HEK293 (cell line): ENCODE measurements at regions of chr11 and their contacts with region 1.

Region 1: GRCh38 chr11:65569973-65570918 is at the start of gene ZNRD2:
- H3K4me3 ChIP-seq: peak within 1 kb of the TSS; percentile 74
- H3K27ac ChIP-seq: peak within 1 kb of the TSS; percentile 93
- H3K4me1 ChIP-seq: peaks cover 16% of the 10 kb centered on the region; the same call in 1 of the 2 replicates
- CTCF ChIP-seq: peak; percentile 92

Region 2: DNA sequence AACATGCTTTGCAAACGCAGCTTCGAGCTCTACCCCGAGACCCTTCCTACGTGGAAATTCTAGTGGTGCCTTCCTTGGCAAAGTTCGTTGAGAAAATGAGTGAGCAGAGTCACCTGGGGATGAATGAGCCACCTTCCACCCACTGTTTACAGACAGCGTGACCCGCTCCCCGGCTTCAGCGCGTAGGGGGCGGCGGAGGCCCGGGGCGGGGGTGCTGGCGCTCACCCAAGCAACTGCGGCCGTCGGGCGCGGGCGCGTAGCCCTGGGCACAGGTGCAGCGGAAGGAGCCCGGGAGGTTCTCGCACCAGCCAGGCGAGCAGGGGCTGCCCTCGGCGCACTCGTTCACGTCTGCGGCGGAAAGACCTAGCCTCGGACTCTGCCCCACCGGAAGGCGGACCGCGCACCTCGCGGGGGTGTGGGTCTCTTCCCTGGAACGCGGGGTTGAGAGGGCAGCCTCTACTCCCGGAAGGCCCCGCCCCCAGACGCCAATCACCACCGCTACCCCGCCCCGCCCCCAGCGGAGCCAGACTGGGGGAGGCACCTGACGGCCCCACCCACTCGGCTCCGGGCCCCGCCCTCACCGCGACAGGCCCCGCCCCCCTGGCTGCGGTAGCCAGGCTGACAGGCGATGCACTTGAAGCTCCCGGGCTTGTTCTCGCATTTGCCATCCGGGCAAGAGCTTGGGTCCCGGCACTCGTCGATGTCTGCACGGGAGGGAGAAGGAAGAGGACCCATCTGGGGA is 23.9 kb before region 1 on chr11:
- CTCF ChIA-PET with region 1: interaction called, 133 read pairs
- POLR2A ChIA-PET with region 1: interaction called, 39 read pairs
- H3K4me3 ChIP-seq: peak overlapping the region; percentile 31
- H3K27ac ChIP-seq: no peak overlapping the region
- H3K4me1 ChIP-seq: no peaks in the 10 kb centered on the region; the same call in 1 of the 2 replicates
- CTCF ChIP-seq: no peak

Region 3: GRCh38 chr11:65558002-65558931 is 12.0 kb before region 1 on chr11 and contains the start of gene LTBP3:
- CTCF ChIA-PET with region 1: interaction called, 39 read pairs
- POLR2A ChIA-PET with region 1: interaction called, 41 read pairs
- H3K4me3 ChIP-seq: peak within 1 kb of the TSS; percentile 52
- H3K27ac ChIP-seq: peak within 1 kb of the TSS; percentile 81
- H3K4me1 ChIP-seq: peaks cover 19% of the 10 kb centered on the region
- CTCF ChIP-seq: no peak

Region 4: GRCh38 chr11:65588199-65589054 is 18.2 kb after region 1 on chr11:
- CTCF ChIA-PET with region 1: interaction called, 28 read pairs
- POLR2A ChIA-PET with region 1: interaction called, 6 read pairs
- H3K4me3 ChIP-seq: no peak overlapping the region
- H3K27ac ChIP-seq: no peak overlapping the region
- H3K4me1 ChIP-seq: no peaks in the 10 kb centered on the region
- CTCF ChIP-seq: peak; percentile 35; the same call in 1 of the 2 replicates

Region 5: DNA sequence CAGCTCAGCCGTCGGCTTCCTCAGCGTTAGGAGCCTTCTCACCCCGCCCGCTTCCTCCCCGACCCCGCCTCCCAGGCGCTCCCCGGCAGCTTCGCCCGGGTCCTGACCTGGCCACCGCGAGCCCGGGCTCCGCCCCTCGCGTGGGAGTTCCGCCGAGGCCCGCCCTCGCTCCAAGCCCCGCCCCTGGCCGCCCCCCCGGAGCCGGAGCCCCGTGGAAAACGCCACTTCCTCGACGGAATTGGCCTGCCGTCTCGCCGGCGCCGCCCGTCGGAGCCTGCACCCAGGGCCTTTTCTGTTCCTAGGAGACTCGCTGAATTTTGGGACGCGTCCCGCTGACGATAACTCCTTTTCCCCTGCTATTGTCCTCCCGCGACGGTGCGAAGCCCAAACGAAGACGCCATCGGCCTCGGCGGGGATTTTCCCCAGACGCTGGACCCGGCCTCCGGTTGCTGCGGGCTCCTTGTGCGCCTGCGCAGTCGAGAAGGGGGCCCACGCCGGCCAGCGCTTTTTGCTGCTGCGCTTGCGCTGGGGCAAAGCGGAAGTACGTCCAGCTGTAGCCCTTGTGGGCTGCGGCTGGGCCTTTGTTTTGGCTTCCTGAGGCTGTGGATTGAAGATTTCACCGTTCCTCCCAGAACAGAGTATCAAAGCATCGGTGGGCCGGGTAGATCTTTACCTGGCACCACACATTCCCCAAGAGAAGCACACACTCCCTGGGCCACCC is 82.4 kb after region 1 on chr11:
- CTCF ChIA-PET with region 1: no interaction called
- POLR2A ChIA-PET with region 1: no interaction called
- H3K4me3 ChIP-seq: peak overlapping the region; percentile 46
- H3K27ac ChIP-seq: peak overlapping the region; percentile 54
- H3K4me1 ChIP-seq: peaks cover 8% of the 10 kb centered on the region
- CTCF ChIP-seq: no peak